ENCODE measurements at regions of chr1 and their contacts with region 1.

Region 1: GRCh38 chr1:207963427-207964194 is 52.7 kb upstream of the CD34 start:
- DNase-seq: peak; percentile 95
- ATAC-seq: peak; percentile 96
- H3K4me3 ChIP-seq: peak overlapping the region; percentile 66
- H3K27ac ChIP-seq: peak overlapping the region; percentile 98
- H3K4me1 ChIP-seq: peaks cover 29% of the 10 kb centered on the region
- H3K27me3 ChIP-seq: no peaks in the 10 kb centered on the region
- CTCF ChIP-seq: peak; percentile 99

Region 2: DNA sequence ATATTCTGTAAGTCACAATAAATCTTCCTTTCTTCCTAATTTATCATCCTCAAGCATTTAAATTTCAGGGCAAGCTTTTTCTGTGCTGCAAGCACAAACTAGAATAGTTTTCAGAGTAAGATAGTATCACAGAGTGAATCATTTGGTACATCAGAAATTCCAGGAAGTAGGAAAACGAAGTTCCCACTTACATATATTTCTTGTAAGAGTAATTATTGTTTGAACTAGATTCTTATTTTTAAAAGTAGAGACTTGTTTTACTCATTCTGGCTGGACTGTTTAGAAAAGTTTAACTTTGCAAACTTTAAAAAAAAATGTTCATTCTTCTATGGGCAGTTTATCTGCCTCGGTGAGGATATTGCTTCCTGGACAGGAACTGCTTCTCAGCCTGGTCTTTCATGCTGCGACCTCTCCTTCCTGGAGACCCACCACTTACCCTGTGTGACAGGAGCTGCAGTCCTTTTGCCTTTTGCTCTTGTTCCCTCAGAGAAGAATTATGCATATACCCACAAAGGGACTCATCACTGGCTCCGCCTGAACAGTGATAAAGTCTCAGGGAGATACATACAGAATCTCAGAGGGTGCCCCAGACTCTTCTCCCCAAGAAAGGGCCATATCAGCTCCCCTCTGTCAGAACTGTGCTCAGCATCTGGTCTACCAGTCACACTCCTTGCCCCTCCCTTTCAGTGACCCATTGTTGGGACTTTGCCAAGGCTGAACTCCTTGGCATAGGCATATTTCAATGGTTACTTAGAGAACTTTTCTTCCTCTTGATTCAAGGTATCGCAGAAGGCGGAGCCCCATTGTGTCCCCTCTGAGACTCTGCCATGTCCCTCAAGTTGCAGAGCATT is 744.9 kb before region 1 on chr1:
- intact Hi-C with region 1: no loop called
- DNase-seq: no peak
- ATAC-seq: peak; percentile 89
- H3K4me3 ChIP-seq: peak overlapping the region; percentile 30
- H3K27ac ChIP-seq: peak overlapping the region; percentile 66
- H3K4me1 ChIP-seq: peaks cover 11% of the 10 kb centered on the region
- H3K27me3 ChIP-seq: no peaks in the 10 kb centered on the region
- CTCF ChIP-seq: no peak

Region 3: GRCh38 chr1:207828485-207829158 is 135.0 kb before region 1 on chr1:
- intact Hi-C with region 1: loop called (anchors 10 kb)
- DNase-seq: peak; percentile 85
- ATAC-seq: peak; percentile 73
- H3K4me3 ChIP-seq: no peak overlapping the region
- H3K27ac ChIP-seq: peak overlapping the region; percentile 98
- H3K4me1 ChIP-seq: peaks cover 84% of the 10 kb centered on the region
- H3K27me3 ChIP-seq: no peaks in the 10 kb centered on the region
- CTCF ChIP-seq: peak; percentile 91

Region 4: DNA sequence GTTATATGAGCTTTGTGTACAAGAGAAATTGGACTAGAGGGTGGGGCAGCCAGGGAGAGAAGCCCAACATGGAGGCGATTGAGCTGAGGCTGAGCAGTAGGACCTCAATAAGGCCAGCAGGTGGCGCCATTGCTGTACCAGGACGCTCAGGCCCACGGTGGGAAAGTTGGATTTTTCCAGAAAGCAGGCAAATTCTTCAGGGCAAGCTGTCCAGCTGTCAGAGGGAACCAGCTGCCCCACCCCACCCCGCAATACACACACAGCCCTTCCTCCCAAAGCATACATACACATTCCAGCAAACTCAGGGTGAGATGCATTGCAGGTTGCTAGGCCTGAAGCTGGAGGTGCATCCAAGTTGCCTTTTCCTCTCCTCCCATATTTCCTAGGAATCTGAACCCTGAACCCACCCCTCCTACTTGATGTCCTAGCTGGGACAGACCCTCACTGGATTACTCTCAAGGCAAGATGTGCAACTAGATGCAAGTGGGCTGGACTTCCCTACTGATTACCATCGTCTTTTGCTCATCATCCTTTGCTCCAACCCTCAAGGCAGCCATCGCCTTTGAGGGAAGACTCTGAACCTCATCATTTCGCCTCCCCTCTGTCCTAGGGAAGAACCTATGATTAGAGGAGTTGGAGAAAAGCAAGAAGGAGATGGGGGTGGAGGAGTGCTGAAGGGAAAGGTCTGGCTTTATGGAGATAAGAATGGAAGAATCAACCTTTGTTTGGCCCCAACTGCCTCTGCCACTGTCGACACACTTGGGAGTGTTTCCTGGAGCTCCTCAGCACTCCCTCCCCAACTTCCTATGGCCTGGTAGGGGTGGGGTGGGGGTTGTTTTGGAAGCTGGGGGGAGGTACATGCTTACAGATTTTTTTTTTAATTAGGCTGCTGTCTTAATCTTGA is 78.2 kb before region 1 on chr1:
- intact Hi-C with region 1: loop called (anchors 5 kb)
- DNase-seq: peak; percentile 84
- ATAC-seq: peak; percentile 97
- H3K4me3 ChIP-seq: no peak overlapping the region
- H3K27ac ChIP-seq: peak overlapping the region; percentile 28
- H3K4me1 ChIP-seq: peaks cover 37% of the 10 kb centered on the region
- H3K27me3 ChIP-seq: no peaks in the 10 kb centered on the region
- CTCF ChIP-seq: peak; percentile 98

Region 5: DNA sequence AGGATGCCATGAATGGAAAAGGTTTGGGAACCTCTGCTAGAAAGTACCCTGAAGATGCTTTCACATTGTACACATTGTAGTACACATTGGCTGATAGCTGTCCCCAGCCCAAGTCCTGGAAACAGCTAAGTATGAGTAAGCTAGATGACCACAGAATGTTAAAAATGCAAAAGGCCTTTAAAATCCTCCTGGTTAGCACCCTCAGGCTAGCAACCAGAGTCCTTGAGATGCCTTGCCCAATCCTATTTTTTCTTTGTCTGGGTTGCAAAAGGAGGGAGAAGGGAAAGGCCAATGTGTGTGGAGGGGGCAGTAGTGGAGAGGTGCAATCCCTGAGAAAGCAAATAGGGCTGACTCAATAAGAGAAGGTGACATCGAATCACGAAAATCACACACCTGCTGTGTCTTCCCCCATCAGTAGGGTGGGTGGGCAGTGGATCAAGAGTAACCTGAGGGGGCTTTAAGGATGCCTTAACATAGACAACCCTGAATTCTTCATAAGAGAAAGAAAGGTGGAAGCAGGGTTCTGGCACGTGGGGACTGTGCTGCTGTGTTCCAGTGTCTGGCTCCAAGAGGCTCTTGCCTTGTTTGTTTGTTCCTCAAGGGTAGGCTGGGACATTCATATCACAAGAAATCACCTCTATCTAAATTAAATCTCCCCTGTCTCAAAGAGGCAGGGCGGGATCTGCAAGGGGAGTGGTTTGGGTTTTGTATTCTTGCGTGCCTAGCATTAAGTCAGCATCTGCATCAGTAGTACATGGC is 546.8 kb after region 1 on chr1:
- intact Hi-C with region 1: no loop called
- DNase-seq: no peak
- ATAC-seq: peak; percentile 91
- H3K4me3 ChIP-seq: no peak overlapping the region
- H3K27ac ChIP-seq: no peak overlapping the region
- H3K4me1 ChIP-seq: no peaks in the 10 kb centered on the region
- H3K27me3 ChIP-seq: no peaks in the 10 kb centered on the region
- CTCF ChIP-seq: no peak